Caco-2 (cell line): ENCODE measurements at regions of chr9 and their contacts with region 1.

Region 1: GRCh38 chr9:94827584-94828304 is 101.2 kb downstream of the AOPEP start:
- DNase-seq: peak; percentile 82 to 84
- H3K4me3 ChIP-seq: no peak overlapping the region
- H3K4me3 Mint-ChIP-seq: peak overlapping the region; percentile 22
- H3K27ac Mint-ChIP-seq: peak overlapping the region; percentile 76
- H3K4me1 ChIP-seq: peaks cover 25% of the 10 kb centered on the region
- H3K4me1 Mint-ChIP-seq: peaks cover 47% of the 10 kb centered on the region
- H3K27me3 ChIP-seq: no peaks in the 10 kb centered on the region
- H3K27me3 Mint-ChIP-seq: no peaks in the 10 kb centered on the region
- CTCF ChIP-seq: no peak

Region 2: GRCh38 chr9:94796687-94797086 is 31.1 kb before region 1 on chr9:
- CTCF ChIA-PET with region 1: no interaction called
- POLR2A ChIA-PET with region 1: no interaction called
- intact Hi-C with region 1: no loop called
- DNase-seq: no peak
- H3K4me3 ChIP-seq: no peak overlapping the region
- H3K4me3 Mint-ChIP-seq: no peak overlapping the region
- H3K27ac Mint-ChIP-seq: no peak overlapping the region
- H3K4me1 ChIP-seq: peaks cover 15% of the 10 kb centered on the region; the same call in 1 of the 2 replicates
- H3K4me1 Mint-ChIP-seq: peaks cover 10% of the 10 kb centered on the region
- H3K27me3 ChIP-seq: no peaks in the 10 kb centered on the region
- H3K27me3 Mint-ChIP-seq: no peaks in the 10 kb centered on the region
- CTCF ChIP-seq: no peak

Region 3: DNA sequence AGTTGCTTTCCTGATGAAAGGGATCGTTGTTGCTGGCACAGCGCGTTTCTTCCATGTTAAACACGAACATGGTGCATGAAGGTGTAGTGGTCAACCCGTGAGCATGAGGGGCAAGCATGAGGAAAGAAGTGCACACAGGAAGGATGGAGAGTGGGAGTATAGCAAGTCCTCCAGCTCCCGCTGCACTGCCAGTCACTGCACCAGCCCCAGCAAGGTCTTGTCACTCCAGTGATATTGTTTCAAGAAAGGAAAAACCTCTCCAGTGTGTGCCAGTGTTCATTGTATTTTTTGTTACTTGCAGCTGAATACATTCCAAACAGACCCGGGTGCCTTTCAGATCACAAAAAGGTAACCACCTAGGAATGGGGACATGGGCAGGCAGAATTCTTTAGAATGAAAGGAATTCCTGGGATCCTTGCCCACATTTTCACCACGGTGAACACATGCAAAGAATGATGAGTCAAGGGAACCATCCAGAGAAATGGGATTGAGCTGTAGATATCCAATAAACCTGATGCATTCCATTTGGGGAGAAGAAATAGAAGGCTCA is 85.0 kb after region 1 on chr9:
- CTCF ChIA-PET with region 1: no interaction called
- POLR2A ChIA-PET with region 1: interaction called, 3 read pairs
- intact Hi-C with region 1: loop called (anchors 5 kb)
- DNase-seq: no peak
- H3K4me3 ChIP-seq: no peak overlapping the region
- H3K4me3 Mint-ChIP-seq: no peak overlapping the region
- H3K27ac Mint-ChIP-seq: peak overlapping the region; percentile 82
- H3K4me1 ChIP-seq: peaks cover 76% of the 10 kb centered on the region
- H3K4me1 Mint-ChIP-seq: peaks cover 47% of the 10 kb centered on the region
- H3K27me3 ChIP-seq: no peaks in the 10 kb centered on the region
- H3K27me3 Mint-ChIP-seq: no peaks in the 10 kb centered on the region
- CTCF ChIP-seq: no peak

Region 4: GRCh38 chr9:95588724-95589652 is 761.2 kb after region 1 on chr9:
- CTCF ChIA-PET with region 1: no interaction called
- POLR2A ChIA-PET with region 1: no interaction called
- intact Hi-C with region 1: no loop called
- DNase-seq: no peak
- H3K4me3 ChIP-seq: no peak overlapping the region
- H3K4me3 Mint-ChIP-seq: no peak overlapping the region
- H3K27ac Mint-ChIP-seq: no peak overlapping the region
- H3K4me1 ChIP-seq: no peaks in the 10 kb centered on the region
- H3K4me1 Mint-ChIP-seq: no peaks in the 10 kb centered on the region
- H3K27me3 ChIP-seq: no peaks in the 10 kb centered on the region
- H3K27me3 Mint-ChIP-seq: peaks cover 6% of the 10 kb centered on the region
- CTCF ChIP-seq: no peak